Posterior vena cava (tissue), 2 donors: ENCODE measurements at regions of chr15 and their contacts with region 1.

Region 1: GRCh38 chr15:36818260-36818659 is 238.8 kb downstream of the CDIN1 start:
- DNase-seq: peak; percentile 76

Region 2: DNA sequence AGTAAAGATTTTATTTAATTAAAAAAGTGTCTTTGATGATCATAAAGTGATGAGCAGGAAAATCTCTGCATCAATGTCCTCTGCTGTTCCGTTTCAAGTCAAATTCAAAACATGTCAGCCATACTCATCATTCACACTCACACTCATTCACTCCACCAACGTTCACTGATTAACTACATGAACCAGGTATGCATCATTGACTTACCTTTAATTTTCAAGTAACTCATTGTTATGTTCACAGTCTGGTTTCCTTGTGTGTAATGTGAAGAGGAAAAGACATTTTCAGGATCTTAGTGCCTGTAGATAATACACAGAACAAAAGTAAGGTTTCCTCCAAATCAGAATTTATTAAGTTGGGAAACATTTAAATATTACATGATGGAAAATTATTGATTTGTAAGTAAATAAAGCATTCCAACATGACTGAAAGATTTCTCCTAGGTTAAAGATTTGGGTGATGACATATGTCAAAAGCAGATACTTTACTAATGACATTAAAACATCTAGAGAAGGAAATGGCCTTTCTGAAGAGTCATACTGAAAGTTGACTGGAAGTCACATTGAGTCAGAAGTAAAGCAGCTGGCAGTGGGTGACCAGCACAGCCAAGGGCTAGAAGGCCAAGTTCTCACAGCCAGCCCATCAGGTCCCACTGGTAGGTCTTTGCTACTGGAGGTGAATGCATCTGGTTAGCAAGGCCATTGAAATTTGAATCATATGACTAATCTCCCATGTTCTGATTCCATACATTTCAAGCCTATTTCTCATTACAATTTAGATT is 13.1 kb after region 1 on chr15:
- intact Hi-C with region 1: loop called in 1 of 2 experiments (anchors 1 kb)
- DNase-seq: no peak